WTC11 (cell line): ENCODE measurements at regions of chr20 and their contacts with region 1.

Region 1: DNA sequence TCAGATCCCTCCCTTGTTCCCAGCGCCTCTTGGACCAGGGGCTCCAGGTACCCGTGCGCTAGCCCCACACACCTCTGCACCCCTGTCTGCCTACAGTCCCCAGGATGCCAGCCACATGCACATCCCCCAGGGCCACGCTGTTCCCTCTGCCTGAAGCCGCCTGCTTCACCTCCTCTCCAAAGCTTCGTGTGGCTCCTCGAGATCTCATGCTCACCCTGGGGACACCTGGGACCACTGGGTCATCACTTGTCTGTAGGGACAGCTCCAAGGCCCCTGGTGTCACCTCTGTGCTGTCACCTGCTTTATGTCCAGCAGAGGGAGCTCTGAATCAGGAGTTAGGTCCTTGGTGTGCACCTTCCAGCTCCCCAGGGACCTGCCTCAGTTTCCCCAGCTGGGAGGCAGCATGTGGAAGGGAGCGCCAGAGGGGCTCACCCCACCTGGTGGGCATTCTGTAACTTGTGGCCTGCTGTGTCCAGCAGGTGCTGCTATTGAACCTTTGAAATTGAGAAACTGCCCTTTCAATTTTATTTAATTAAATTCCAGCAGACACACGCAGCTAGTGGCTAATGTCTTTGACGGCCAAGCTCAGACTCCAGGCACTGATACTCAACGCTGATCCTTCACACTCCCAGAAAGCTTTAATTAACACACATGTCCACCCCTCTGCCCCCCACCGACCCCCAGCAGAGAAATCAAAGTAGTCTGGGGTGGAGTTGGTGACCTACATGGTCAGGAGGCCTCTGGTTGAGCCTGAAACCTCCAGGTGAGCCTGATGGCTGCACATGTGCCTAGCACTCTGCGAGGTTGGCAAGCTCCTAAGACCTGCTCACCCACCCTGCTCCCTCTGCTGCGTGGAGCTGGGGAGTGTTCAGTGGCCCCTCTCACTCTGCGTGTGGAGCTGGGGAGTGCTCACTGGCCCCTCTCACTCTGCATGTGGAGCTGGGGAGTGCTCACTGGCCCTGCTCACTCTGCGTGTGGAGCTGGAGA is 7.6 kb upstream of the YTHDF1 start:
- DNase-seq: peak; percentile 81
- ATAC-seq: peak; percentile 71
- H3K4me3 Mint-ChIP-seq: no peak overlapping the region
- H3K27ac Mint-ChIP-seq: no peak overlapping the region
- H3K4me1 Mint-ChIP-seq: peaks cover 2% of the 10 kb centered on the region
- H3K27me3 Mint-ChIP-seq: peaks cover 4% of the 10 kb centered on the region; the same call in 1 of the 2 replicates
- CTCF ChIP-seq: peak; percentile 81

Region 2: DNA sequence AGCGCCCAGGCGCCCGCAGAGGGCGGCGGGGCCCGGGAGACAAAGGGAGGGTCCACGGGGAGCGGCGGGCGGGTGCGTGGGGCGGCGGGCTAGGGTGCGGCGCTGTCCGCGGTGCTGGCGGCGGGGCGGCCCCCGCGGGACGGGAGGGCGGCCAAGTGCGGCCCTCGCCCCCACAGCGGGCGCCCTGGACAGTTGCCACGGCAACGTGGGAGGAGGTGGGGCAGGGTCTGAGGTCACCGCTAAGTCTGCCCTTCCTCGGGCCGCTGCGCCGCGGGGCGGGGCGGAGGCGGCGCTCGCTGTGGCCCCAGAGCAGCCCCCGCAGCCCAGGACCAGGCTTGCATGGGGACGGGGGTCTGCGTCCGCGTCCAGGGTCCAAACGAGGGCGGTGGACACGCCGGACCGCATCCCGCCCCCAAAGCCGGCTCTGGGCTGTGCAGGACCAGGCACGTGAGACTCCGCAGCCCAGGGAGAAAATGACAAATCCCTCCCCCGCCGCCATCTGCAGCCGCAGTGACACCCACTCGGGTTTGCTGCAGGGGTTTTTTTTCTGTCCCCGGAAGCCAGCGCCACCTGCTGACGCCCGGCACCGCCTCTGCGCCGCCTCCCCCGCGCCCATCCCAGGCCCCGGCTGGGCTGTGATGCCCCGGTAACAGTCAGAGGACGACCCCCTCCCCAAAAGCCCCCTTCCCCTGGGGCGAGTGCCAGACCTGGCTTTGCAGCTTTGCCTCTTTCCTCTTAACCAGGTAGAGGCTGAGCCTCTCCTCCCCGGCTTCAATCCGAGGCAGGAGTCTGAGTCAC is 44.4 kb before region 1 on chr20:
- CTCF ChIA-PET with region 1: interaction called, 20 read pairs
- POLR2A ChIA-PET with region 1: no interaction called
- DNase-seq: peak; percentile 57
- ATAC-seq: peak; percentile 1; the same call in 1 of the 2 replicates
- H3K4me3 Mint-ChIP-seq: peak overlapping the region; percentile 65
- H3K27ac Mint-ChIP-seq: no peak overlapping the region
- H3K4me1 Mint-ChIP-seq: peaks cover 10% of the 10 kb centered on the region
- H3K27me3 Mint-ChIP-seq: peaks cover 47% of the 10 kb centered on the region
- CTCF ChIP-seq: no peak

Region 3: GRCh38 chr20:63241272-63241671 is 17.8 kb after region 1 on chr20:
- CTCF ChIA-PET with region 1: interaction called, 151 read pairs
- POLR2A ChIA-PET with region 1: no interaction called
- DNase-seq: no peak
- ATAC-seq: no peak
- H3K4me3 Mint-ChIP-seq: no peak overlapping the region
- H3K27ac Mint-ChIP-seq: no peak overlapping the region
- H3K4me1 Mint-ChIP-seq: no peaks in the 10 kb centered on the region
- H3K27me3 Mint-ChIP-seq: no peaks in the 10 kb centered on the region; the same call in 1 of the 2 replicates
- CTCF ChIP-seq: no peak

Region 4: DNA sequence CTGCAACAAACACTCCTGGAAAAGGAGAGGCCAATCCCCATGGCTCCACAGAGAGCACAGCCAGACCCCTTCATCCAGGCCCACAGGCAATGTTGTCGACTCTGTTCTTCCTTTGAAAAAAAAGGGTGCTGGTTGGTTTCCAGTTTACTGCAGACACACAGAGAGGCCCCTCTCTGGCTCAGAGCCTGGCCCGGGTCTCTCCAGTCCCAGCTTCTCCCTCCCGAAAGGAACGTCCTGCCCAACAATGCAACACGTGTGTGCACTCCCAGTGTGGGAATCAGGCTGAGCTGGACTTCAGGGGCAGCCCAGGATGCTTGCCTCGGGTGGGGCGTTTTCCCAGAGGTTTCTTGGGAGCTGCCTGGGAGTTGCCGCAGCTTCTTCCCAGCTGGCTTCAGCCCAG is 35.3 kb after region 1 on chr20:
- CTCF ChIA-PET with region 1: interaction called, 173 read pairs
- POLR2A ChIA-PET with region 1: interaction called, 4 read pairs
- DNase-seq: no peak
- ATAC-seq: no peak
- H3K4me3 Mint-ChIP-seq: no peak overlapping the region
- H3K27ac Mint-ChIP-seq: no peak overlapping the region
- H3K4me1 Mint-ChIP-seq: peaks cover 23% of the 10 kb centered on the region
- H3K27me3 Mint-ChIP-seq: peaks cover 26% of the 10 kb centered on the region
- CTCF ChIP-seq: no peak

Region 5: GRCh38 chr20:63280929-63281545 is 57.5 kb after region 1 on chr20:
- CTCF ChIA-PET with region 1: interaction called, 66 read pairs
- POLR2A ChIA-PET with region 1: no interaction called
- DNase-seq: peak; percentile 67
- ATAC-seq: peak; percentile 91
- H3K4me3 Mint-ChIP-seq: no peak overlapping the region
- H3K27ac Mint-ChIP-seq: no peak overlapping the region; the same call in 1 of the 2 replicates
- H3K4me1 Mint-ChIP-seq: no peaks in the 10 kb centered on the region
- H3K27me3 Mint-ChIP-seq: no peaks in the 10 kb centered on the region
- CTCF ChIP-seq: 0 out of 2 replicates have a peak, but pooled peaks have one; percentile 39

Region 6: DNA sequence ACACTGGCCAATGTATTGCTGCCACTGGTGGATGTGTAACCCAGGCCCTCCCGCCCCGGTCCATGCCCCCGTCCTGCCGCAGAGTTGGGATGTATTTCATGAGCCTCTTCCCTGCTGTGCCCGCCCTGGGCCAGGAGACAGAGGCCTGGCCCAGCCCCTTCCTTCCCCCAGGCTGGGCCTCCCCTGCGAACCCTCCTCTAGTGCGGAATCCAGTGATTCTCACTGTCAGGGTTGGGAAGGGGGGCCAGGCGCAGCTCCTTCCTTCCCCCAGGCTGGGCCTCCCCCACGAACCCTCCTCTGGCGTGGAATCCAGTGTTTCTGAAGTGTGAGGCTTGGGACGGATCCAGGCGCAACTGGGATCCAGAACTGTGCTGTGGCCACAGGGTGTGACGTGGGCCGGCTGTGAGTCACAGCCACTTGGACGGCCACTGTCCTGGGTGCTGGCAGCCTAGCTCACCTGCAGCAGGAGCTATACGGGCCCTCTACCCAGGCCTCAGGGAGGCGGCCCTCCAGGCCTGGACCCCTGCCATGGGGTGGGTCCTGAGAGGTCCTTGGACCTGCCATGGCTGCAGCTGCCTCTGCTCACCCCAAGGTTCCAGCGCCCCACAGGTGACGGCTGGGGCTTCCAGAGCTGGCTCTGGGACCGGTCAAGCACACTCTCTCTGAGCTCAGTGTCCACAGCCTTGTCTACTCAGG is 97.8 kb after region 1 on chr20:
- CTCF ChIA-PET with region 1: interaction called, 11 read pairs
- POLR2A ChIA-PET with region 1: no interaction called
- DNase-seq: no peak
- ATAC-seq: no peak
- H3K4me3 Mint-ChIP-seq: no peak overlapping the region
- H3K27ac Mint-ChIP-seq: no peak overlapping the region
- H3K4me1 Mint-ChIP-seq: peaks cover 2% of the 10 kb centered on the region; the same call in 1 of the 2 replicates
- H3K27me3 Mint-ChIP-seq: no peaks in the 10 kb centered on the region
- CTCF ChIP-seq: no peak

Region 7: DNA sequence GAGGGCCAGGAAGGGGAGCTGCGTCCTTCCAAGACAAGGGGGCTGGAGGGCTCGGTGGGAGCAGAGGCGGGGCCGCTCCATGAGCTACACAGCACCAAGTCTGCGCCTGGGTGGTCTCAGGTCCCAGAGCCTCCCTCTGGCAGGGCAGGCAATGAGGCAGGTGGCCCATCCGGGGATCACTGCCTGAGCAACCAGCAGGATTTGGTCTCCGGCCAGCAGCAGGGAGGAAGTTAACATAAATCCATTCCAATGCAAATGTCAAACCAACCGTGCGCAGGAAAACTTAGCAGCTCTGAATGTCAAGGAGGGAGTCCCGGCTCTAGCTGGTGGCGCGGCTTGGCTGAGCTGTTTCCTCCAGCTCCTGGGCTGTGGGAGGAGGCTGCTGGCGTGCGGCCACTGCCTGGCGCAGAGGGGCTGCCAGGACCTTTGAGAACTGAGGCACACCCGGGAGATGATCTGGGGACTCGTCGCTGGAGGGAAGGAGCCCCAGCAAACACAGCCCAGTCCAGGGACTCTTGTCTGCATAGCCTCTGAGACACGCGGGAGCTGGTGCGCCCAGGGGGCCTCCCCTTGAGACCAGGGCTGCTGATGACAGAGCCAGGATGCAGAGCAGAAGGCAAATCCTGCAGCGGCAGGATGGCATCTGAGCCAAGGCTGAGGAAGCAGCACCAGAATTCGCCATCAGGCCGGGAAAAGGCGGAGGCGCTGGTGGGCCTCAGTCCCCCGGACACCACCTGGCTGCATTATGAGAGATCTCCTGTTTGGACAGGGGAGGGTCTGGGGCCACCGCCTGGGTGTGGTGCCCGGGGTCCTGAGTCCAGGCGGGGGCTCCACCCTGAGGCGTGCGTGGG is 170.8 kb after region 1 on chr20:
- CTCF ChIA-PET with region 1: interaction called, 16 read pairs
- POLR2A ChIA-PET with region 1: no interaction called
- DNase-seq: peak; percentile 67
- ATAC-seq: peak; percentile 80
- H3K4me3 Mint-ChIP-seq: peak overlapping the region; percentile 16; the same call in 1 of the 2 replicates
- H3K27ac Mint-ChIP-seq: peak overlapping the region; percentile 84
- H3K4me1 Mint-ChIP-seq: peaks cover 27% of the 10 kb centered on the region
- H3K27me3 Mint-ChIP-seq: no peaks in the 10 kb centered on the region; the same call in 1 of the 2 replicates
- CTCF ChIP-seq: no peak